AG04449 (cell line): ENCODE measurements at regions of chr5 and their contacts with region 1.

Region 1: DNA sequence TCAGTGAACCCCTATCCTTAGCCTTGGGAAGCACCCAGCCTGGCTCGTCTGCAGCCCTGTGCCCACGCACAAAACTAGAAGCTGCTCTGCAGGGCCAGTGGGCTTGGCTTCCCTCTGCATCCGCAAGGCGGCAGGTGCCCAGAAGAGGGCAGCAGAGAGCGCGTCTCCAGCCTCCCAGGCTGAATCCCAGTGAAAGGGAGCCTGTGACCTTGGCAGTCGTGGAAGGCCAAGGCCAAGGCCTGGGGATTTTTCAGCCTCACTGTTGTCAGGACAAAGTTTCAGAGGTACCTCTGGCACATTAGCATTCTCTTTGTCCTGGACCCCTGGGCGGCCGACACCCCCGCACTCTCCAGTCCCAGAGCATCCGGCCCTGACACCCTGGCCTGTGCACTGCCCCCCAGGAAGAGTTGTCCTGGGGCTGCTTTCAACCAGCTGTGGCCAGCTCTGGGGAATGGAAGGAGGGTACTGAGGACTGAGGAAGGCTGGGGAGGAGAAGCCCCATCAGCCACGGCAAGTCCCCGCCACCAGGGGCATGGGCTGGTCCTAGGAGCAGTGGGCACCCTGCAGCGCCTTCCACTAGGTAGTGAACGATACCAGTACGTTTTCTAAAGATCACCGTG is 63.6 kb upstream of the IL17B start:
- DNase-seq: no peak
- H3K4me3 ChIP-seq: no peak overlapping the region
- CTCF ChIP-seq: peak; percentile 96

Region 2: DNA sequence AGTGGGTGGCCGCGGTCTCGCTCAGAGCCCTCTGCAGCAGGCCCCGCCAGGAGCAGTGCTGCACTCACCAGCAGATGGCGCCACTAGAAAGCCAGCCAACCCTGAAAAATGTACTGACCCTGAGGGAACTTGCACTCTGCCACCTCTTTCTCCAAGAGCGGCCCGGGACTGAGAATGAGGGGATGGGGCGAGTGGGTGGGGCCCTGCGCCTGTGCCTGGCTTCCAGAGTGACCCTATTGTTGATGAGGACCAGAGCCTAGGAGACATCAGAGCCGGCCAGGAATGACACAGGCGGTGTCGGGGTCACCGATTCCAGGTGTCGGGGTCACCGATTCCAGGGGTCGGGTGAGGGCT is 60.7 kb before region 1 on chr5:
- CTCF ChIA-PET with region 1: interaction called, 519 read pairs
- POLR2A ChIA-PET with region 1: no interaction called
- DNase-seq: no peak
- H3K4me3 ChIP-seq: peak overlapping the region; percentile 18
- CTCF ChIP-seq: peak; percentile 95

Region 3: DNA sequence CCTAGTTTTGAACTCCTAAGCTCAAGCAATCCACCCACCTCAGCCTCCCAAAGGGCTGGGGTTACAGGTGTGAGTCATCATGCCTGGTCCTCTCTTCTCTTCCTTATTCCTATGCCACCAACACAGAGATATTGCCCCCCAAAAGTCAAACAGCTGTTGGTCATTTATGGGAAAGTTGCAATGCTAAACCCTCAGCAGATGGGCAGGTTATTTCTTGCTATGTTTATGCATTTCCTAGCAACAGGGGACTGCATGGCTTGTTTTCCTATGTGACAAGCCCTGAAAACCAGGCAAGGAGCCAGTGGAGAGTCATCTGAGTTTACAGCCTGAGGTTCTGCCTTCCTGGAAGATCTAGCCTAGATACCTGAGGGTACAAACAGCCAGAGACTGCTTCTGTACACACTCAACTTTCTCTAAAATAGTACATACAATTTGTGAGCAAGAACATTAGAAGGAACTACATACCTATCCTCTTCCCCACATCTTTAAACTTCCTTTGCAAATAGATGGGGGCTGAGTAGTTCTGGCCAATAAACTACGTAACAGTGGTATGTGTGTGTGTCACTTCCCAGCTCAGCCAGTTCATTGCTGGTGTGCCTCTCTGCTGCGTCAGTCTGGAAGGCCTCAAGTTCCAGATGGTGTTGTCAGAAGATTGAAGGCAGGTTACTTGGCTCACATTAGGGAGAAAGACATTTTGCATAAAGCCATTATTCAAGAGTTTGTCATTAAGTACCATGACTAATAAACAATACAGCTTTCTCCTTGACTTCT is 43.2 kb after region 1 on chr5:
- CTCF ChIA-PET with region 1: interaction called, 15 read pairs
- POLR2A ChIA-PET with region 1: interaction called, 21 read pairs
- DNase-seq: peak; percentile 100
- H3K4me3 ChIP-seq: no peak overlapping the region
- CTCF ChIP-seq: no peak

Region 4: DNA sequence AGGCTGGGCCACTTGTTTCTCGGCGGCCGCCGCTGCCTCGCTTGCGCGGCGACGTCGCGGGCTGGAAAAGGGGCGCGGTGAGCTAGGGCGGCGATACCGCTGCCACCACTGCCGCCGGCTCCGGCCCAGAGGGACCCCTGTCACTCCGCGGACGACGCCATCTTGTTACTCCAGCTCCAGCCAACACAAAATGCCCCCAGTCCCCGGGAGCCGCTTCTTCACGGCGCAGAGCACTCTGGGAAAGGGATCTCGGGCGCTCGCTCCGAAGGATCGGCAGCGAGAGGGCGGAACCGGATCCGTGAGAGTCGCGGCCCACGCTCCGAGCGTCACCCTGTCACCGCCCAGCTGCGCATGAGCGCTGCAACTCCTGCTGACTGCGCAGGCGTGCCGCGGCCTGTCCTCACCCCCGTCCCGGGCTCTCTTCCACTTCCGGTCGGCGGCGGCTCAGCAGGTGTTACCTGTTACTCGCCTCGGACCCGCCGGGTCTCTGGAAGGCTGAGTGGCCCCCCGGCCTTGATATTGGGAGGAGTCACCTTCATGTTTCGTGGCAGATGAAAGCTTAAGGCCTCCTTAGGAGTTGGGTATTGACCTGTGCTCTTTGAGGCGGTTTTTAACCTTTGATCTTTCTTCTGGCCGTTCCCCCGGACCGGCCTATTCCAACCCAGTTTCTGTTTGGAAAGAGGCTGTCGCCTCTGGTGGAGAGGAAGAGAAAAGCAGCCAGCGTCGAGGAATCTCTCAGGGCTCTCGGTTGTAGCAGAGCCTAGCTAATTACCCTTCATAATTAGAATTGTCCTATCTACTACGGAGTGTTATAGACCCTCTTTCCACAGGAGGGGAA is 108.7 kb after region 1 on chr5 and contains the start of gene CSNK1A1:
- CTCF ChIA-PET with region 1: interaction called, 678 read pairs
- POLR2A ChIA-PET with region 1: interaction called, 19 read pairs
- DNase-seq: peak; percentile 82
- H3K4me3 ChIP-seq: peak within 1 kb of the TSS; percentile 95
- CTCF ChIP-seq: peak; percentile 64

Region 5: DNA sequence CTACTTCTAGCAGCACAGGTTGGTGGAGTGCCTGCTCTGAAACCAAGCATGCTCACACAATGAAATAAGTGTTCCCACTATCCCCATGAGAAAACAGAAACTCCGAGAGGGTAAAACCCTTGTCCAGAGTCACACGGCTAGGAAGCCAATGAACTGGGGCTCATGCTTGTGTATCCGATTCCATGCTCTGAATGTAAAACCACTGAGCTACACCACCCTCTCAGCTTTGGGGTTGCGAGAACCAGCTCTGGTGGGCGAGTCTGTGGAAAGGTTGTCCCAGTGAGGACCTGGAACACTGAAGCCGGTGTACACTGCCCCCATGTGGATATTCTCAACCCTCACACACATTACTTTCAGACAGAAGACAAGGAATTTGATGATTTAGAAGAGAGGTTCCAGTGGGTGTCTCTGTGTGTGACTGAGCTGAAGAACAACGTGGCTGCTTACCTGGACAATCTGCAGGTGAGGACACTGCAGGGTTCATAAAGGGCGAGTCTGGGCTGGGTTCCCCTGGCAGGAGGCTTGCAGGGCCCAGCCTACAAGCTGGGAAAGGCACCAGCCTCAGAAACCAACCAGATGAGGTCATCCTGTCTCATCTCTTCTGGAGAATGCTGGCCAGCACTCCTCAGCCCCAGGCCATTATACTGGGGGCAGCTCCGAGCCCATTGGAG is 176.0 kb after region 1 on chr5:
- CTCF ChIA-PET with region 1: interaction called, 93 read pairs
- POLR2A ChIA-PET with region 1: no interaction called
- DNase-seq: no peak
- H3K4me3 ChIP-seq: no peak overlapping the region
- CTCF ChIP-seq: peak; percentile 72

Region 6: DNA sequence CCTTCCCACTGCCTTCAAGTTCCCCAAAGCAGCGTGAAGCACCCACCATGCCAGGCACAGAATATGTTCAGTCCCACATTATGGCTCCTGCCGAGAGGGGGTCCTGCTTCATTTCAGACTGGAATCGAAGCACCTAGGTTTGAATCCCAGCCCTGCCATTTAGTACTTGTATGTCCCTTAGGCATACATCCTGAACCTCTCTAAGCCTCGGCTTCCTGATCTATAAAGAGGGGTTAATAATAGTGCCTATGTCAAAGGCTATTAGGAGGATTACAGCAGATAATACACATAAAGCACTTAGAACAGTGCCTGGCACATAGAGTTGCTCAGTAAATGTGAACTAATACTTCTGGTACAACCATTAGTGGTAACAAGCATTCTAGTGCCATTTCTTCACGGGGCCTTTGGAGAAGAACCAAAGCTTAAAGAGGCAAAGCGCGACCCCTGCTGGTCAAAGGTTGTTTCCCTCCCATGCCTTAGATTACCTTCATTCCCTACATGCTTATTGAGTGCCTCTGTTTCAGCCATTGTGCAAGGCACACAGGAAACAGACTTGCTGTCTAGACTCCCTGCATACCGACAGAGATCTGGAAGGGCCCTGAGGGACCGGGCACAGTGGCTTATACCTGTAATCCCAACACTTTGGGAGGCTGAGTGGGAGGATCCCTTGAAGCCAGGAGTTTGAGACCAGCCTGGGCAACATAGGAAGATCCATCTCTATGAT is 385.6 kb after region 1 on chr5:
- CTCF ChIA-PET with region 1: no interaction called
- POLR2A ChIA-PET with region 1: no interaction called
- DNase-seq: peak; percentile 79
- H3K4me3 ChIP-seq: no peak overlapping the region
- CTCF ChIP-seq: peak; percentile 88

Region 7: DNA sequence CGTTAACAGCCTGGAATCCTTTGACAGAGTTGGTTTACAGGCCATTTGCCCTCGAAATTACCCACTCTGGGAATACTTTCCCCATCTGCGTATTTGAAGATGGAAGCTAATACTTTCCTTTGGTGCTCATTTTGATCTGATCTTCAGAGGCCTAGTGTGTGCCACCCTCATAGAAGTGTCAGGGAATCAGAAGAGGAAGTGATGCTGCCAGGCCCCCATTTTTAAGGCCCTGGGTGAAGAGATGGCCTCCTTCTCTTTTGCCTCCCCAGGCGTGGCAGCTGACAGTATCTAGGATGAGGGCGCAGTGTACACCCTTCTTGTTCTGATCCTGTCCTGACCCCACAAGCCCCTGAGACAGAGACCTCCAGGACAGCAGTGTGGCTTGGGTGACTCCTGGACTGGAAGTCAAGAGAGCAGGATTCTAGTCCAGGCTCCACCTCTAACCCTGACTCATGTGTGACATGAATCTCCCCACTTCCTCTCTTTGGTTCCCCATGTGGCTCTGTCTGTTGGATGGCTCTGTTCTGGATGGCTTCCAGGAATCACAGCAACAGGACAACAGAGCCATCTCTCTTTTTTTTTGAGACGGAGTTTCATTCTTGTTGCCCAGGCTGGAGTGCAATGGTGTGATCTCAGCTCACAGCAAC is 615.9 kb after region 1 on chr5:
- CTCF ChIA-PET with region 1: no interaction called
- POLR2A ChIA-PET with region 1: no interaction called
- DNase-seq: no peak
- H3K4me3 ChIP-seq: no peak overlapping the region
- CTCF ChIP-seq: no peak